Posterior cingulate gyrus (tissue), 11 donors: ENCODE measurements at regions of chrX and their contacts with region 1.

Region 1: DNA sequence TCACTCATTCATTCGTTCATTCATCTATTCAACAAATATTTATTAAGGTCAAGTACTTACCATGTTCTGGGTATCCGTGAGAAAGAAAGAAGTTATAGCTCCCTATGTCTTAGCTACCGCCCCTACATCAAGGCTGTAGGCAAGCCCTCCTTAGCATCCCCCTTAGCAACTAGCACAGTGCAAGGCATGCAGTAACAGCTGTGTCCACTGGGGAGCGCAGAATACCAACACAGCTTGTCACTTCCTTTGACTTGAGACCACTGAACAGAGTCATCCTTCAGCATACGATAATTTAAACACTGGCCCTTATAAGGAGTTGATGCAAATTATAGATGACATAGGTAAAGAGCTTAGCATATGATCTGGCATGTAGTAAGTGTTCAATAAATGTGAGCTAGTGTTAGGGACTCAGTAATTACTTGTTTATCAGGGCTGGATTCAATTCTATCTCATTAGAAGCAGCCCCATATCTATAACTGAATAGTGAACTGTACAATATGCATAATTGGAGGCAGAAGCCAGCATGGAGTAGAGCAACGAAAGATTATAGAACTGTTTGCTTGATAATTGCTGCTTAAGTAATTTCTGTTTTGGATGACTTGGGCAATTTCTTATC is 8.7 kb downstream of the KIAA1210 start:
- DNase-seq: peak in 6 of 10 donors; percentile 24 to 86 (median 44)

Region 2: DNA sequence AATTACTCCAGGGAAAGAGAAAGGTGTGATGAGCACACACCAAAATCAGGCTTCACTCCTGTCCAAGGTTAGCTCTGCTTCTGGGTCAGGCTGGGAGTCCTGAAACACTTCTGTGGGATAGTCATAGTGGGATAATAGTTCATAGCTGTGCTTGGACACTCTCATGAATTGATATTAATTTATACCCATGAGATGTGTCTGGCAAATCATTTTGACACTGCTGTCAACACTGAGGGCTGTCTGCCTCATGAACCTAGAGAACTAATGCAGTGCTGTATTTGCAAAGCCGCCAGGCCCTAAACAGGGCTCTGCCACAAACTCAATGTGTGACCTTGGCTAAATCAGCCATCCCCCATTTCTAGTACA is 92.7 kb after region 1 on chrX:
- intact Hi-C with region 1: loop called (anchors 10 kb)
- DNase-seq: no peak

Region 3: GRCh38 chrX:119266364-119266995 is 147.6 kb after region 1 on chrX:
- intact Hi-C with region 1: loop called (anchors 10 kb)
- DNase-seq: peak in 2 of 10 donors; percentile 19 to 39